ENCODE measurements at regions of chr20 and their contacts with region 1.

Region 1: GRCh38 chr20:41095110-41095969 is 42.0 kb upstream of the PLCG1 start:
- DNase-seq: peak; percentile 42 to 81 (median 62)
- ATAC-seq: peak; percentile 88
- H3K4me3 ChIP-seq: no peak overlapping the region
- H3K27ac ChIP-seq: no peak overlapping the region
- H3K4me1 ChIP-seq: peaks cover 0 to 10% of the 10 kb centered on the region in 2 donors
- H3K27me3 ChIP-seq: no peaks in the 10 kb centered on the region
- CTCF ChIP-seq: peak; percentile 74 to 76

Region 2: DNA sequence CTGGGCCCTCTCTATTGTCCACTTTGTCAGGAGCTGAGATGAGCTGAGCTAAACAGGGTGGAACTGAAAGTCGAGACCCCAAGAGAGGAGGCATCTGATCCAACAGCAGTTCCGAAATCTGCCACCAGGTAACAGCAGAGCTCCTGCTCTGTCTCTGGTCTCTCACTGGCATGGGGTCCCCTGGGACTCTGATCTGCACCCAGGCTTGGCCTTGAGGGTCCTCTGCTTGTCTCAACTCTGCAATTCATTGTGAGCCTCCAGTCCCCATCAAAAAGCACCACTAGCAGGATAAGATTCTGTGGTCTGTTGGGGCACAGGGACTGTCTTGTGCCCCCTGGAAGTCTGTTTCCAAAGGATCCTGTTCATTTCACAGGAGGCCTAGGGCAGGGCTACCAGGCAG is 129.2 kb before region 1 on chr20:
- intact Hi-C with region 1: loop called in 1 of 2 experiments (anchors 5 kb)
- DNase-seq: no peak
- ATAC-seq: no peak
- H3K4me3 ChIP-seq: no peak overlapping the region
- H3K27ac ChIP-seq: no peak overlapping the region
- H3K4me1 ChIP-seq: peaks cover 0 to 26% of the 10 kb centered on the region in 2 donors
- H3K27me3 ChIP-seq: peaks cover 0 to 9% of the 10 kb centered on the region in 2 donors
- CTCF ChIP-seq: no peak

Region 3: GRCh38 chr20:40990542-40991120 is 104.7 kb before region 1 on chr20:
- intact Hi-C with region 1: loop called in 1 of 2 experiments (anchors 5 kb)
- DNase-seq: peak; percentile 67 to 85 (median 80)
- ATAC-seq: peak; percentile 99
- H3K4me3 ChIP-seq: no peak overlapping the region
- H3K27ac ChIP-seq: peak overlapping the region in 1 of 2 donors; percentile 73
- H3K4me1 ChIP-seq: peaks cover 4 to 24% of the 10 kb centered on the region in 2 donors
- H3K27me3 ChIP-seq: no peaks in the 10 kb centered on the region
- CTCF ChIP-seq: peak; percentile 64 to 81

Region 4: DNA sequence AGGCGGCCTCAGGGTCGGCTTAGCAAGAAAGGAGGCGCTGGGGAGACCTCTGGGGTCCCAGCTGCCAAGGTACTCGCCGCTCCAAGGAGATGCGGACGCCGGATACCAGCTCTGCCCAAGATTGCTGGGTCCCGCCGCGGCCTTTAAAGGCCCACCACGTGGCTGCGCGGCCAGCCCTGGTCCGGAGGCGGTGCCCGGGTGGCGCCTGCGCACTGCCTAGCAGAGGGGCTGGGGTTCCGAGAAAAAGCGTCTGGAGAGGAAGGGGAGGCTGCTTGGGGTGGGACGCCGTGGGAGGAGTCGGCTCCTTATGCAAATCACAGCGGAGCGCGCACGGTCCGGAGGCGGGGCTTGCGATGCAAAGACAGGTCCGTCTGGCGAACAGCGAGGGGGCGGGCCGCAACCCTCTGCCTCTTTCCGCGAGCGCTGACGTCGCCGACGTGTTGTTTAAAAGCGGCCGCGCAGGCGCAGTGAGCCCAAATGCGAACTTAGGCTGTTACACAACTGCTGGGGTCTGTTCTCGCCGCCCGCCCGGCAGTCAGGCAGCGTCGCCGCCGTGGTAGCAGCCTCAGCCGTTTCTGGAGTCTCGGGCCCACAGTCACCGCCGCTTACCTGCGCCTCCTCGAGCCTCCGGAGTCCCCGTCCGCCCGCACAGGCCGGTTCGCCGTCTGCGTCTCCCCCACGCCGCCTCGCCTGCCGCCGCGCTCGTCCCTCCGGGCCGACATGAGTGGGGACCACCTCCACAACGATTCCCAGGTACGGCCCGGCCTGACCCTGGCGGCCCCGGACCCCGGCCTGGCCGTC is 66.8 kb before region 1 on chr20 and contains the start of gene TOP1:
- intact Hi-C with region 1: no loop called
- DNase-seq: peak; percentile 100
- ATAC-seq: peak; percentile 96
- H3K4me3 ChIP-seq: peak within 1 kb of the TSS; percentile 94 to 95
- H3K27ac ChIP-seq: peak within 1 kb of the TSS; percentile 94 to 98
- H3K4me1 ChIP-seq: peaks cover 27 to 42% of the 10 kb centered on the region in 2 donors
- H3K27me3 ChIP-seq: no peaks in the 10 kb centered on the region
- CTCF ChIP-seq: peak in 1 of 2 donors; percentile 7
- polyA plus RNA-seq, gene TOP1: 85.2 to 99.3 (median 96.7) TPM

Region 5: GRCh38 chr20:41232973-41233926 is 137.9 kb after region 1 on chr20:
- intact Hi-C with region 1: no loop called
- DNase-seq: no peak
- ATAC-seq: peak; percentile 47
- H3K4me3 ChIP-seq: no peak overlapping the region
- H3K27ac ChIP-seq: peak overlapping the region; percentile 33 to 61
- H3K4me1 ChIP-seq: peaks cover 14 to 26% of the 10 kb centered on the region in 2 donors
- H3K27me3 ChIP-seq: no peaks in the 10 kb centered on the region
- CTCF ChIP-seq: no peak

Region 6: GRCh38 chr20:41275301-41275731 is 180.0 kb after region 1 on chr20:
- intact Hi-C with region 1: no loop called
- DNase-seq: peak in 1 of 4 donors; percentile 33
- ATAC-seq: peak; percentile 69
- H3K4me3 ChIP-seq: no peak overlapping the region
- H3K27ac ChIP-seq: no peak overlapping the region
- H3K4me1 ChIP-seq: peaks cover 8 to 20% of the 10 kb centered on the region in 2 donors
- H3K27me3 ChIP-seq: no peaks in the 10 kb centered on the region
- CTCF ChIP-seq: no peak